HepG2 (cell line): ENCODE measurements at regions of chr6 and their contacts with region 1.

Region 1: GRCh38 chr6:16770701-16771569 is 9.7 kb upstream of the ATXN1 start:
- DNase-seq: peak; percentile 69
- ATAC-seq: peak; percentile 98
- H3K4me3 ChIP-seq: peak overlapping the region in 1 of 3 experiments; percentile 24; a peak in 1 of 6 replicates
- H3K27ac ChIP-seq: no peak overlapping the region
- H3K4me1 ChIP-seq: peaks cover 31% of the 10 kb centered on the region
- H3K27me3 ChIP-seq: no peaks in the 10 kb centered on the region
- CTCF ChIP-seq: peak; percentile 94
- EP300 ChIP-seq: 0 out of 4 replicates have a peak, but pooled peaks of 1 of the 2 experiments have one; percentile 9
- POLR2A ChIP-seq: no peak
- RAD21 ChIP-seq: peak; percentile 90

Region 2: GRCh38 chr6:16286148-16286522 is 484.8 kb before region 1 on chr6:
- CTCF ChIA-PET with region 1: interaction called, 4 read pairs
- POLR2A ChIA-PET with region 1: no interaction called
- in situ Hi-C with region 1: no loop called
- intact Hi-C with region 1: loop called (anchors 5 kb)
- DNase-seq: peak; percentile 37
- ATAC-seq: peak; percentile 86
- H3K4me3 ChIP-seq: no peak overlapping the region
- H3K27ac ChIP-seq: no peak overlapping the region
- H3K4me1 ChIP-seq: no peaks in the 10 kb centered on the region
- H3K27me3 ChIP-seq: peaks cover 1 to 11% of the 10 kb centered on the region in 2 experiments; a peak in 2 of 5 replicates
- CTCF ChIP-seq: peak; percentile 94
- EP300 ChIP-seq: no peak
- POLR2A ChIP-seq: no peak
- RAD21 ChIP-seq: peak; percentile 86

Region 3: DNA sequence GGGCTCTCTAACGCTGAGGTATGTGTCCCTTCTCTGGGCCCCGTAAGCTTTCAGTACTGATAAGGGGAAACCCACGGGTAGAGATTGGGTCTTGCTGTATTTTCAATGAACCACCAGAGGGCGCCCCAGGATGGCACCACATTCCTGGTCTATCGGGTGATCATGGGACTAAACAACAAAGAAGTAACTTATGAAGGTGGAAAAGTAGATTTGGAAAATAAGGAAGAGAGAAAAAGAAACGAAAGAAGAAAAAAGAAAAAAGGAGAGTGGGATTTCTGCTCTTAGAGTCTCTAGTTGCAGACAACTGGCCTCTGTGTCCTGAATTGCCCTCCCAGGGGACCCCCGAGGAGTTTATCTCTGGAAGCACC is 438.8 kb before region 1 on chr6:
- CTCF ChIA-PET with region 1: interaction called, 10 read pairs
- POLR2A ChIA-PET with region 1: no interaction called
- in situ Hi-C with region 1: no loop called
- intact Hi-C with region 1: loop called (anchors 1 kb)
- DNase-seq: peak; percentile 78
- ATAC-seq: peak; percentile 94
- H3K4me3 ChIP-seq: no peak overlapping the region
- H3K27ac ChIP-seq: no peak overlapping the region
- H3K4me1 ChIP-seq: peaks cover 7% of the 10 kb centered on the region
- H3K27me3 ChIP-seq: no peaks in the 10 kb centered on the region
- CTCF ChIP-seq: peak; percentile 91
- EP300 ChIP-seq: no peak
- POLR2A ChIP-seq: no peak
- RAD21 ChIP-seq: peak; percentile 79; the same call in 1 of the 2 replicates

Region 4: GRCh38 chr6:16514249-16514648 is 256.7 kb before region 1 on chr6:
- CTCF ChIA-PET with region 1: interaction called, 10 read pairs
- POLR2A ChIA-PET with region 1: no interaction called
- in situ Hi-C with region 1: no loop called
- intact Hi-C with region 1: loop called (anchors 2 kb)
- DNase-seq: peak; percentile 28
- ATAC-seq: peak; percentile 44
- H3K4me3 ChIP-seq: no peak overlapping the region
- H3K27ac ChIP-seq: no peak overlapping the region
- H3K4me1 ChIP-seq: peaks cover 20% of the 10 kb centered on the region
- H3K27me3 ChIP-seq: no peaks in the 10 kb centered on the region
- CTCF ChIP-seq: peak; percentile 43; the same call in 1 of the 2 replicates
- EP300 ChIP-seq: no peak
- POLR2A ChIP-seq: no peak
- RAD21 ChIP-seq: no peak

Region 5: GRCh38 chr6:16964553-16965501 is 193.9 kb after region 1 on chr6:
- CTCF ChIA-PET with region 1: no interaction called
- POLR2A ChIA-PET with region 1: no interaction called
- in situ Hi-C with region 1: loop called (anchors 5 kb)
- intact Hi-C with region 1: loop called (anchors 2 kb)
- DNase-seq: peak; percentile 67
- ATAC-seq: peak; percentile 99
- H3K4me3 ChIP-seq: peak overlapping the region in 1 of 3 experiments; percentile 32; a peak in 2 of 6 replicates
- H3K27ac ChIP-seq: no peak overlapping the region
- H3K4me1 ChIP-seq: peaks cover 6% of the 10 kb centered on the region
- H3K27me3 ChIP-seq: peaks cover 0 to 21% of the 10 kb centered on the region in 2 experiments; a peak in 2 of 5 replicates
- CTCF ChIP-seq: peak; percentile 97
- EP300 ChIP-seq: no peak
- POLR2A ChIP-seq: no peak
- RAD21 ChIP-seq: peak; percentile 88

Region 6: GRCh38 chr6:16999491-17000436 is 228.8 kb after region 1 on chr6:
- CTCF ChIA-PET with region 1: no interaction called
- POLR2A ChIA-PET with region 1: no interaction called
- in situ Hi-C with region 1: no loop called
- intact Hi-C with region 1: no loop called
- DNase-seq: no peak
- ATAC-seq: no peak
- H3K4me3 ChIP-seq: no peak overlapping the region
- H3K27ac ChIP-seq: no peak overlapping the region
- H3K4me1 ChIP-seq: no peaks in the 10 kb centered on the region
- H3K27me3 ChIP-seq: peaks cover 4 to 20% of the 10 kb centered on the region in 2 experiments; a peak in 2 of 5 replicates
- CTCF ChIP-seq: no peak
- EP300 ChIP-seq: no peak
- POLR2A ChIP-seq: no peak
- RAD21 ChIP-seq: no peak

Region 7: GRCh38 chr6:17086469-17086868 is 315.5 kb after region 1 on chr6:
- CTCF ChIA-PET with region 1: no interaction called
- POLR2A ChIA-PET with region 1: no interaction called
- in situ Hi-C with region 1: loop called (anchors 10 kb)
- intact Hi-C with region 1: no loop called
- DNase-seq: peak; percentile 63
- ATAC-seq: peak; percentile 95
- H3K4me3 ChIP-seq: no peak overlapping the region
- H3K27ac ChIP-seq: no peak overlapping the region
- H3K4me1 ChIP-seq: no peaks in the 10 kb centered on the region
- H3K27me3 ChIP-seq: peaks cover 0 to 10% of the 10 kb centered on the region in 2 experiments; a peak in 1 of 5 replicates
- CTCF ChIP-seq: peak; percentile 74
- EP300 ChIP-seq: no peak
- POLR2A ChIP-seq: no peak
- RAD21 ChIP-seq: 0 out of 2 replicates have a peak, but pooled peaks have one; percentile 39